ENCODE measurements at regions of chr18 and their contacts with region 1.

Region 1: GRCh38 chr18:51171223-51171622 is 26.3 kb downstream of the MEX3C start:
- DNase-seq: no peak
- H3K4me3 Mint-ChIP-seq: peak overlapping the region; percentile 26
- H3K27ac Mint-ChIP-seq: peak overlapping the region; percentile 97
- H3K4me1 Mint-ChIP-seq: peaks cover 63% of the 10 kb centered on the region
- H3K27me3 Mint-ChIP-seq: no peaks in the 10 kb centered on the region

Region 2: GRCh38 chr18:50973367-50974126 is 197.7 kb before region 1 on chr18:
- CTCF ChIA-PET with region 1: no interaction called
- POLR2A ChIA-PET with region 1: no interaction called
- intact Hi-C with region 1: loop called (anchors 5 kb)
- DNase-seq: peak; percentile 23
- H3K4me3 Mint-ChIP-seq: no peak overlapping the region
- H3K27ac Mint-ChIP-seq: peak overlapping the region; percentile 75
- H3K4me1 Mint-ChIP-seq: peaks cover 34% of the 10 kb centered on the region
- H3K27me3 Mint-ChIP-seq: no peaks in the 10 kb centered on the region

Region 3: DNA sequence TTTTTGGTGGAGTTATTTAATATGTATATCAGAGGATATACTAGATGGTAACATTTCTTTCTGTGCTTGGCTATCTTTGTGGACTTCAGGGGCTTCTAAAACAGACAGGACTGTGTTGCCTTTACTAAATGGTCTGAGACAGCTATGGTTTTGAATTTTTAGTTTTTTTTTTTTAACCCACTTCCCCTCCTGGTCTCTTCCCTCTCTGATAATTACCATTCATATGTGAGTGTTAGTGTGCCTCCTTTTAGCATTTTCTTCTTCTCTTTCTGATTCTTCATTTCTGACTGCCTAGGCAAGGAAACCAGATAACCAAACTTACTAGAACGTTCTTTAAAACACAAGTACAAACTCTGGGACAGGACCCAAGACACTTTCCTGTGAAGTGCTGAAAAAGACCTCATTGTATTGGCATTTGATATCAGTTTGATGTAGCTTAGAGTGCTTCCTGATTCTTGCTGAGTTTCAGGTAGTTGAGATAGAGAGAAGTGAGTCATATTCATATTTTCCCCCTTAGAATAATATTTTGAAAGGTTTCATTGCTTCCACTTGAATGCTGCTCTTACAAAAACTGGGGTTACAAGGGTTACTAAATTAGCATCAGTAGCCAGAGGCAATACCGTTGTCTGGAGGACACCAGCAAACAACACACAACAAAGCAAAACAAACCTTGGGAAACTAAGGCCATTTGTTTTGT is 88.5 kb before region 1 on chr18:
- CTCF ChIA-PET with region 1: no interaction called
- POLR2A ChIA-PET with region 1: no interaction called
- intact Hi-C with region 1: no loop called
- DNase-seq: no peak
- H3K4me3 Mint-ChIP-seq: no peak overlapping the region
- H3K27ac Mint-ChIP-seq: peak overlapping the region; percentile 51
- H3K4me1 Mint-ChIP-seq: peaks cover 15% of the 10 kb centered on the region
- H3K27me3 Mint-ChIP-seq: no peaks in the 10 kb centered on the region

Region 4: DNA sequence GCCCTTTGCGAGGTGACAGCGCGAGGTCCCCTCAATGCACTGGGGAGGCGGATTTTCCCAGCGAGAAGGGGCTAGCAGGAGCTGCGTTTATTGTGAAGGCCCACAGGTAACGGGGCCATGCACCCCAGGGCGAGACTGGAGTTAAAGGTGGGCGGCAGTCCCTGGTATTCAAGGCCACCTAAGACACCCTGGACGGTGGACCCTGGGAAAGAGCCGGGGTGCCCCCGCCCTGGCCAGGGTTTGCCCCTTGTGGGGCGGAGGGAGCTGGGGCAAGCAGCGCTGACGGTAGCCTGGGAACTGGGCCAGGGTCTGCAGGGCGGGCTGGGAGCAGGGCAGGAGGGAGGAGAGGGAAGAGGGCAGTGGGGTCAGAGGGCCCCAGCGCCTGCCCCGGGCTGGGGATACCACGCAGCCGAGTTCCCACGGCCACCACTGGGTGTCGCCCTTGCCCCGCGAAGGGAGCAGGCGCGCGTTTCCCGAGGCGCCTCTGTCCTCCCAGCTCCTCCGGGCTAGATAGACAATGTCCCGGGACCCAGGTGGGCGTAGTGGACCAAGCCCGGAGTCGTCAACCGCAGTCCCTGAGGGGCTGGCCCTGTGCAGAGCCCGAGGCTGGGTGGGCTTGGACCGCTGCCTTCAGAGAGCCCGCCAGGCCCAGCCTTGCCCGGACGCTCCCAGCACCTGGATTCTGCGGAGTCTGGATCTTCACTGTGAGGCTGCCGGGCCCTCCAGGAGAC is 61.0 kb before region 1 on chr18:
- CTCF ChIA-PET with region 1: interaction called, 3 read pairs
- POLR2A ChIA-PET with region 1: no interaction called
- intact Hi-C with region 1: loop called (anchors 1 kb)
- DNase-seq: peak; percentile 79
- H3K4me3 Mint-ChIP-seq: no peak overlapping the region
- H3K27ac Mint-ChIP-seq: no peak overlapping the region
- H3K4me1 Mint-ChIP-seq: peaks cover 15% of the 10 kb centered on the region
- H3K27me3 Mint-ChIP-seq: no peaks in the 10 kb centered on the region

Region 5: GRCh38 chr18:51182824-51183223 is 11.6 kb after region 1 on chr18:
- CTCF ChIA-PET with region 1: interaction called, 3 read pairs
- POLR2A ChIA-PET with region 1: interaction called, 13 read pairs
- intact Hi-C with region 1: loop called (anchors 1 kb)
- DNase-seq: no peak
- H3K4me3 Mint-ChIP-seq: no peak overlapping the region
- H3K27ac Mint-ChIP-seq: peak overlapping the region; percentile 32
- H3K4me1 Mint-ChIP-seq: peaks cover 70% of the 10 kb centered on the region
- H3K27me3 Mint-ChIP-seq: no peaks in the 10 kb centered on the region

Region 6: DNA sequence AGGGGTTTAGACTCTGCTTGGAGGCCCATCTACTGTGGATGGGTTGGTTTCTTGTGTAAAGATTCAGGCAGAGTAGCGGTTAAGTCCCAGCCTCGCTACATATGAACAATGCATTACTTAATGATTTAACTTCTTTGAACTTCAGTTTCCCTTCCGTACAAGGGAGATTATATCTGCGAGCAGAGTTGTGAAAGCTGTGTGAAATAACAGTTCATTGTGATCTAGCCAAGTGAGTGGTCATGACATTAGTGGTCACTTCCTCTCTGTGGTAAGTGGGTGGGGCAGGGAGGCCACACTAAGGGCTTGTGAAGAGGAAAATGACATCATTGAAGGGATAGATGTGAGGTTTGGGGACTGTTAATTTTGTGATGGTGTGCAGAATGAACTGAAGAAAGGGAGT is 40.3 kb after region 1 on chr18:
- CTCF ChIA-PET with region 1: no interaction called
- POLR2A ChIA-PET with region 1: interaction called, 3 read pairs
- intact Hi-C with region 1: loop called (anchors 1 kb)
- DNase-seq: peak; percentile 84
- H3K4me3 Mint-ChIP-seq: no peak overlapping the region
- H3K27ac Mint-ChIP-seq: peak overlapping the region; percentile 35
- H3K4me1 Mint-ChIP-seq: peaks cover 14% of the 10 kb centered on the region
- H3K27me3 Mint-ChIP-seq: no peaks in the 10 kb centered on the region

Region 7: DNA sequence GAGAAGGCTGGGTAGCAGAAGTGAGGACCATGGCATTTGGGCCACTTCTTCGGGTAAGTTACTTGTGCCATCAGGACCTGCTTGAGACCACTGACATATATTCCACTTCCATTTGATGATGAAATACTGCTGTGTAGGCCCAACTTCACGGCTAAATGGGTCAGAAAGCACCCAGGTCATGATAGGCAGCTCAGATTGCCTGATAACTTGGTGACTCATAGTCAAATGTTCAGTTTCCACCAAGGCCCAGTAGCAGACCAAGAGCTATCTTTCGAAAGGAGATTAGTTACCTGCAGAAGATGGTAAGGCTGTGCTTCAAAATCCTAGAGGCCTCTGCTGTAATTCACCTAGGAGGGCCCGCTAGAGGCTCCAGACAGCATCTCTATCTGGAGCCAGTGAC is 58.1 kb after region 1 on chr18:
- CTCF ChIA-PET with region 1: no interaction called
- POLR2A ChIA-PET with region 1: no interaction called
- intact Hi-C with region 1: no loop called
- DNase-seq: no peak
- H3K4me3 Mint-ChIP-seq: no peak overlapping the region
- H3K27ac Mint-ChIP-seq: no peak overlapping the region
- H3K4me1 Mint-ChIP-seq: peaks cover 2% of the 10 kb centered on the region
- H3K27me3 Mint-ChIP-seq: peaks cover 6% of the 10 kb centered on the region

Measured in activated CD4-positive, alpha-beta memory T cell treated with anti-CD3 and anti-CD28 coated beads for 36 hours (primary cell).